Lower lobe of right lung (tissue), 2 donors: ENCODE measurements at regions of chr17 and their contacts with region 1.

Region 1: DNA sequence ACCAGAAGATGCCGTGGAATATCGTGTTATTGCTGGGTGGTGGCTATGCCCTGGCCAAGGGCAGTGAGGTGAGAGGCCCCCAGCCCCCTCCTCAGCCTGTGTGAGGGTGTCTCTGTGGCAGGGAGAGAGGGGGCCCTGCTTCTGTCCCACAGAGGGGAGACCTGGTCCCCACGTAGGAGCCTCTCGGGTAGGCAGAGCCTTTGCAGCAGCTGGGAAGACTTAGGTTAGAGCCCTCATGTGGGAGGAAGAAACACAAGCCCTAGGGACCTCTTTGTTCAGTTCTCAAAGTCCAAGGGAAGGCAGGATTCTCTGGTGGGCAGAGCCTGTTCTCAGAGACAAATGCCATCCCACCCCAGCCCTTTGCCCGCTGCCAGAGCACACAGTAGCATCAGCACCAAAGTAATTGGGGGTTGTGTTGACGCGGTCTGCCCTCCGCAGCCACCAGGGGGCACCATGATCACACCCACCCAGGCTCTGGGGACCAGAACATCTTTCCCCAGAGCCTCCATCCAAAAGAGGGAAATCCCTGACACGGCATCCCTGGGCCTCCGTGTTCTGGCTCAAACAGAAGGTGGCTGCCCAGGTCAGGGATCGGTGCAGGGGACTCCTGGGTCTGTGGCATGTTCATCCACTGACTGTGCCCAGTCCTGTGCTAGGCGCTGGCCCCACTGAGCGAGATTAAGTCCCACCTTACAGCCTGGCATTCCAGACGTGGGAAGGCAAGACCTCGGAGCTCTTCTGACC is 11.5 kb upstream of the FOXN1 start:
- DNase-seq: peak; percentile 77
- ATAC-seq: peak; percentile 83 to 86
- H3K4me3 ChIP-seq: no peak overlapping the region
- H3K27ac ChIP-seq: no peak overlapping the region
- H3K4me1 ChIP-seq: no peaks in the 10 kb centered on the region
- H3K27me3 ChIP-seq: no peaks in the 10 kb centered on the region
- CTCF ChIP-seq: peak; percentile 89

Region 2: GRCh38 chr17:28547623-28548416 is 53.2 kb after region 1 on chr17:
- intact Hi-C with region 1: loop called (anchors 10 kb)
- DNase-seq: peak; percentile 82
- ATAC-seq: peak; percentile 73 to 84
- H3K4me3 ChIP-seq: no peak overlapping the region
- H3K27ac ChIP-seq: peak overlapping the region; percentile 21
- H3K4me1 ChIP-seq: peaks cover 39% of the 10 kb centered on the region
- H3K27me3 ChIP-seq: no peaks in the 10 kb centered on the region
- CTCF ChIP-seq: peak; percentile 93

Region 3: DNA sequence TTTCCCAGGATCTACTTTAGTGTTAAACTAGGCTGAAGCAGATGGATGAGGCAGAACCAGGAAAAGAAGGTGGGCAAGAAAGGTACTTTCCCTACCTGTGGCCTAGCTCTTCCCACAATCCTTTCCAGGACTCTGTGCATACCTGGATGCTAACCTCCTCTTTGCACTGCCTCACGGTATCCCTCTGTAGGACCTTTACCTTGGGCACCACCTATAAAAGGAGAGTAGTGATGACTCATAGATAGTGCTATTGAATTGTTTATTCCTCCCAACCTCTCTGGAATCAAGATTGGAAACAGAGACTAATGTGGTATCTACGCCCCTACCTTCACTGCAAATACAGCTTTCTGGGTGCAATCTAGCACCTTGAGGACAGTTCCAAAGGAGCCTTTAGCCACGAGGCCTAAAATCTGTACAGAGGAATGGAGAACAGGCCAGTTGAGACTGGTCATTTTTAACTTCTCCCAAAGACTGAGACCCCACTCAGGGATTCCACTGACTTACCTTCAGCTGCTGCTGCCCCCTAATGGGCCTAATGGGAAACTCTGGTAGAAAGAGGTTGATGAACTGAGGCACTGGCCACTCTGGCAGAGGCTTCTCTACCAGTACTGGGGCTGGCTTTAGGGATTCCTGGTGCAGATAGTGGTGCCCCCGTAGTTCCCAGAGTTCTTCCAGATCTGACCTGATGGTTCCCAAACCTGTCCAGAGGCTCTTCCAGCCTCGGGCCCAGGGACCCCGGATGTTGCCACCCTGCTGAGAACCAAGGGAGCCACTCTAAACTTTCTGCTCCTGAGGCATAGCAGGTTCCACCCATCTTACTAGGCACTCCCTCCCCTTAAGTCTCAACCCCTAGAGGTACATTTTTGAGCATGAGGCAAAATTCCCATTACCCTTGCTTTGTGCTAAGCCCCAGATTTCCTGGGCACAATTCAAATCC is 118.6 kb after region 1 on chr17:
- intact Hi-C with region 1: loop called (anchors 10 kb)
- DNase-seq: no peak
- ATAC-seq: peak; percentile 55 to 66
- H3K4me3 ChIP-seq: no peak overlapping the region
- H3K27ac ChIP-seq: no peak overlapping the region
- H3K4me1 ChIP-seq: no peaks in the 10 kb centered on the region
- H3K27me3 ChIP-seq: no peaks in the 10 kb centered on the region
- CTCF ChIP-seq: peak; percentile 60

Region 4: GRCh38 chr17:28839221-28839620 is 344.6 kb after region 1 on chr17:
- intact Hi-C with region 1: no loop called
- DNase-seq: no peak
- ATAC-seq: no peak
- H3K4me3 ChIP-seq: no peak overlapping the region
- H3K27ac ChIP-seq: no peak overlapping the region
- H3K4me1 ChIP-seq: peaks cover 14% of the 10 kb centered on the region
- H3K27me3 ChIP-seq: no peaks in the 10 kb centered on the region
- CTCF ChIP-seq: no peak